Activated CD8-positive, alpha-beta T cell treated with anti-CD3 and anti-CD28 coated beads, Interleukin-2, amount 10 ng/mL, durations not matched to agents 7 days and 5 days (primary cell): ENCODE measurements at regions of chr12 and their contacts with region 1.

Region 1: DNA sequence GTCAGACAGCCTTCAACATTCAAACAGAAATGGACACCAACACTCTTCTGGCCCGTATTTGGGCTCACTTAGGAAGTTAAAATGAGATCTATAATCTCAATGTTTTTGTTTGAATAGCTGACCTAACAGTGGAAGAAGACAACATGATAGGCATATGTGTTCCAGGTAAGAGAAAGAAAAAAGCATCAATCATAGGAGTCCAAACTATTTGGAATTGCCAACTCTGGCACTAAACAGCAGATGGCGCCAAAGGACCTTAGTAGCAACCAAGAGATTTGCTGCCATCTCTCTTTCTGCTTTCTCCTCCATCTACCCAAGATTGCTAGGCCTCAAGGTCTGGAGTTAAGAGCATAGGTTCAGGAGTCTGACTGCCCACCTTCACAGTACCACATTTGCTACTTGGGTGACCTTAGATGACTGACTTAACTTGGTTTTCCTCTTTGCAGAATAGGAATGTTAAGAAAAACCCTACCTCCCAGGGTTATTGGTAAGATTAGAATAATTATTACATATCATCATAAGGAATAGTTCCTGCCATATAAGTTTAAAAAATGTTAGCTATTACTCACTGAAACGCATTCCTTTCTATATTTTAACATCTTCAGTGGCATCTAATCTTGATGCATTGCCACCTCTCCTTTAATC is 30.2 kb downstream of the PEX5 start:
- DNase-seq: peak; percentile 82
- ATAC-seq: no peak
- H3K4me3 Mint-ChIP-seq: no peak overlapping the region
- H3K27ac Mint-ChIP-seq: no peak overlapping the region
- H3K4me1 Mint-ChIP-seq: no peaks in the 10 kb centered on the region
- H3K27me3 Mint-ChIP-seq: no peaks in the 10 kb centered on the region

Region 2: DNA sequence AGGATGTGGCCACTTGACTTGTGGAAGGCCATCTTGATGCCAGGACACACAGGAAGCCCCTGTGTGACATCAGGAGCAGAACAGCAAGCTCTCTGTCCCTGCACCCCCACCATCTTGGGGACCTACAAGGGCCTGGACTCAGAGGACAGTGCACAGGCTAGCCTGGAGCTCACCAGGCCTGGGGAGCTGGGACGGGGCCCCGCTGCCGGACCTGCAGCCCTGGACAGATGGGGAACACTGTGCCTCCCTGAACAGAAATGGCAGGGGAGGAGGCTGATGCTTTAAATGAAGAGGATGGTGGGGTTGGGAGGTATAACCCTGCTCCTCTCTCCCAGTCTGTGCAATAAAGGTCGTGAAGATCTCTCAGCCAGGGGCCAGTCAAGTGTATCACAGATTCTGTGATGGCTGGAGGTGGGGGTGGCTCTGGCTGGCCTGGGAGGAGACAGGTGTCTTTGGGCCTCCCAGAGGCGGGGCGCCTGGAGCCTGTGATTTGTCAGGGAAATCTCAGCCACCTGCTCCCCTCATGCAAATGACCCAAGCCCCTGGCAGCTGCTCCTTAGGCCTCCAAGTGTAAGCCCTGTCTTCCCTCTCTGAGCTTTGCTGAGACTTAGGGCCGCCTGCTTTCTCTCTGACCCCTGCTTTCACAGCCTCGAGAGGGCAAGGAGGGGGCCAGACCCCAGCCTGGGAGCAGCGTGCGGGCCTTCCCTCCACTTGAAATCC is 380.1 kb before region 1 on chr12:
- CTCF ChIA-PET with region 1: no interaction called
- POLR2A ChIA-PET with region 1: no interaction called
- DNase-seq: no peak
- ATAC-seq: no peak
- H3K4me3 Mint-ChIP-seq: no peak overlapping the region
- H3K27ac Mint-ChIP-seq: no peak overlapping the region
- H3K4me1 Mint-ChIP-seq: peaks cover 3% of the 10 kb centered on the region
- H3K27me3 Mint-ChIP-seq: peaks cover 3% of the 10 kb centered on the region

Region 3: DNA sequence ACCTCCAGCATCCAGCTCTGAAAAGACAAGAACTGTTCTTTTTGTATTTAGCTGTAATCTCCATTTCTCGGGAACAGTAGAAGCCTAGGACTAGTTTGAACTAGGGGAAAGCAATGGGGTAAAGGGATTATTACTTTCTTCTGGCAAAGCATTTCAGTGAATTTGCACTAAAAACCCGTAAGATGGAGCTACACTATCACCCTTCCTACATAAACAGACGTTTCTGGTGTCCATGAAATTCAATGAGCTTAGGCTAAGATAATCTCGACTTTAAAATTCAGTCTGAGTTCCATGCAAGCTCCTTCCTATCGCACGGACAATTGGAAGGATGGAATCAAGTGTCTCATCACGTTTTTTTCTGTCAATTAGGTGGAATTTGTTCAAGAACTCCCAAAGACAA is 108.2 kb after region 1 on chr12:
- CTCF ChIA-PET with region 1: no interaction called
- POLR2A ChIA-PET with region 1: no interaction called
- DNase-seq: no peak
- ATAC-seq: no peak
- H3K4me3 Mint-ChIP-seq: no peak overlapping the region
- H3K27ac Mint-ChIP-seq: no peak overlapping the region
- H3K4me1 Mint-ChIP-seq: peaks cover 9% of the 10 kb centered on the region
- H3K27me3 Mint-ChIP-seq: peaks cover 28% of the 10 kb centered on the region

Region 4: DNA sequence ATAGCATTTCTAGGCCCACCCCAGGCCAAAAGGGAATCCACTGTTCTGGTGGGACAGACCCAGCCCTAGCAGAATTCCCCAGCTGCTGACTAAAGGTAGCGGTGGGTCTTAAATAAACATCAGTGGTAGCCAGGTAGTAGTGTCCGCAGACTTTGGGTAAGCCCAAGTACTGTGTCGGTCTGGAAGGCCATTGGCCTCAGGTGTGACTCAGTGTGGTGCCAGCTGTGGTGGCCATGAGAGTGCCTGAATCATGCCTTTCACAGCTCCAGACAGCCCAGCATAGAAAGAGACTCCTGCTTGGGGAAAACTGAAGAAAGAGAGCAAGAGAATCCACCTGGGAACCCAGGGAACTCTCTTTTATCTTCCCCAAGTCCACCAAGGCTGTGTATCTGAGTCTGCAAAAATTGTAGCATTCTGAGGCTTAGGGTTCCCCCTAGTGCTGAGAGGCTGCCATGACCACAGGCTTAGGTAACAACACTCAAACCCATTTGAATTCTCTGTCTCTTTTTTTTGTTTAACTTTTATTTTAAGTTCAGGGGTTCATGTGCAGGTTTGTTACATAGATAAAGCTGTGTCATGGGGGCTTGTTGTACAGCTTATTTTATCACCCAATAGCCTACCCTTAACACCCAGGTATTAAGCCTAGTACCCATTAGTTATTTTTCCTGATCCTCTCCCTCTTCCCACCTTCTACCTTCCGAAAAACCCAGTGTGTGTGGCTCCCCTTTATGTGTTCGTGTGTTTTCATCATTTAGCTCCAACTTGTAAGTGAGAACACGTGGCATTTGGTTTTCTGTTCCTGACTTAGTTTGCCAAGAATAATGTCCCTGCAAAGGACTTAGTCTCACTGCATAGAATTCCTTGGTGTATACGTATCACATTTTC is 240.9 kb after region 1 on chr12:
- CTCF ChIA-PET with region 1: interaction called, 14 read pairs
- POLR2A ChIA-PET with region 1: no interaction called
- DNase-seq: peak; percentile 54
- ATAC-seq: peak; percentile 60
- H3K4me3 Mint-ChIP-seq: no peak overlapping the region
- H3K27ac Mint-ChIP-seq: no peak overlapping the region
- H3K4me1 Mint-ChIP-seq: no peaks in the 10 kb centered on the region
- H3K27me3 Mint-ChIP-seq: peaks cover 10% of the 10 kb centered on the region